ENCODE measurements at regions of chr20 and their contacts with region 1.

Region 1: GRCh38 chr20:38165089-38165989 is at the start of gene TGM2:
- DNase-seq: peak; percentile 41
- H3K4me3 Mint-ChIP-seq: no peak within 1 kb of the TSS
- H3K27ac Mint-ChIP-seq: no peak within 1 kb of the TSS
- H3K4me1 Mint-ChIP-seq: peaks cover 5% of the 10 kb centered on the region
- H3K27me3 Mint-ChIP-seq: peaks cover 21% of the 10 kb centered on the region
- total RNA-seq, gene TGM2: not detected

Region 2: DNA sequence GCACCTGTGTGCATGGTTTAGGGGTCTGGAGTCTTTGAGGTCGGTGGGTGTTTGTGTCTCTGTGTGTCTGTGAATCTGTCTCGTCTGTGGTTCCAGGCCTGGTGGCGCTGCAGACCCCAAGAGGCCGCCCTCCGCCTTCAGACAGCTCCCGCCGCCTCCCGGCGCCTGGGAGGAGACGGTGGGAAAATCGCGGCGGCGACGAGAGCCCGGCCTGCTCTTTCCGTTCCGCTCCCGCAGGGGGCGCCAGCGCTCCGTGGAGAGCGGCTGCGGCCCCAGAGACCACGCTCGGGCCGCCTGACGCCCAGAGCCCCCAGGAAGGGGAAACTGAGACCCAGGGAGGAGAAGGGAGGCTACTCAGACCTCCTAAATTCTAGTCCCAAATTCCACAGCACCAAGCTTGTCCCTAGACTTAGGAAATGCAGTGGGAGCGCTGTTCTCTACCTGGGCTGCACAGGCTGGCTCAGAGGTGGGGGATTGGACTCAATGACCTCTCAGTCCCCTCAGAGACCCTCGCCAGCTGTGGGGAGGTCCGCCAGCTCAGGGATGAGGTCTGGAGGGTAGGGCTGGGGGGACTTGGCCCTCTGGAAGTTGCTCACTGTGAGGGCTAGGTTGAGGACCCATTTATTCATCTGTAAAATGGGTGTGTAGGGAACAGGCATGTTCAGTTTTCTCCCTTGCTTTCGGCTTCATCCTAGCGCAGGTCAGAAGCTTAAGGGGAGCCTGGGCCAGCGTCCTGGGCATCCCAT is 600.8 kb before region 1 on chr20:
- CTCF ChIA-PET with region 1: no interaction called
- intact Hi-C with region 1: loop called (anchors 5 kb)
- DNase-seq: peak; percentile 39
- H3K4me3 Mint-ChIP-seq: no peak overlapping the region
- H3K27ac Mint-ChIP-seq: no peak overlapping the region
- H3K4me1 Mint-ChIP-seq: peaks cover 2% of the 10 kb centered on the region
- H3K27me3 Mint-ChIP-seq: peaks cover 37% of the 10 kb centered on the region

Region 3: GRCh38 chr20:37901654-37902503 is 263.5 kb before region 1 on chr20:
- CTCF ChIA-PET with region 1: interaction called, 3 read pairs
- intact Hi-C with region 1: loop called (anchors 5 kb)
- DNase-seq: peak; percentile 61
- H3K4me3 Mint-ChIP-seq: peak overlapping the region; percentile 26
- H3K27ac Mint-ChIP-seq: no peak overlapping the region
- H3K4me1 Mint-ChIP-seq: peaks cover 13% of the 10 kb centered on the region
- H3K27me3 Mint-ChIP-seq: peaks cover 62% of the 10 kb centered on the region

Region 4: DNA sequence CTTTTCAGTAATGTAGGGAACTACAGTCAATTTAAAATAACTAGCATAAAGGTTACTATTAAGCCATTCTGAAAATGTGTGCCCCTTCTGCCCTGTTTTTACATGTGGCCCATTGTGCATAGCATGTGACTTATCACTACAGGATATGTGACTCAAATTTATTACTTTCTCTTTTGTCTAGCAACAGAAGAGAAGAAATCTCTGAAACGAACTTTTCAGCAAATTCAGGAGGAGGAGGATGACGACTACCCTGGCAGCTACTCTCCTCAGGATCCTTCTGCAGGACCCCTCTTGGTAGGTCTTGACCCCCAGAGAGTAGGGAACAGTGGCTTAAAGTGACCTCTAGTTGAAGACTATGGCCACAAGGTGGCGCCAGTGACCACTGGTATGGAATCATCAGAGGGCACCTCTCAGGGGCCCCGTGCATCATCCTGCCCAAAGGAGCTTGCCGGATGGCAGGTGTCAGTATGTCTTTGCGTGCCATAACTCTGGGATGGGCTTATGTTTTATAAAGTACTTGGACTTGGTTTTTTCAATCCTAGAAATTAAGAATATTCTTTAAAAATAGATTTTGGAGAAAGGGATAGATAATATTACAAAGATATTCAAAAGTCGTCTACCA is 107.9 kb before region 1 on chr20:
- CTCF ChIA-PET with region 1: interaction called, 7 read pairs
- intact Hi-C with region 1: loop called (anchors 1 kb)
- DNase-seq: peak; percentile 82
- H3K4me3 Mint-ChIP-seq: no peak overlapping the region
- H3K27ac Mint-ChIP-seq: peak overlapping the region; percentile 73
- H3K4me1 Mint-ChIP-seq: peaks cover 40% of the 10 kb centered on the region
- H3K27me3 Mint-ChIP-seq: no peaks in the 10 kb centered on the region

Region 5: DNA sequence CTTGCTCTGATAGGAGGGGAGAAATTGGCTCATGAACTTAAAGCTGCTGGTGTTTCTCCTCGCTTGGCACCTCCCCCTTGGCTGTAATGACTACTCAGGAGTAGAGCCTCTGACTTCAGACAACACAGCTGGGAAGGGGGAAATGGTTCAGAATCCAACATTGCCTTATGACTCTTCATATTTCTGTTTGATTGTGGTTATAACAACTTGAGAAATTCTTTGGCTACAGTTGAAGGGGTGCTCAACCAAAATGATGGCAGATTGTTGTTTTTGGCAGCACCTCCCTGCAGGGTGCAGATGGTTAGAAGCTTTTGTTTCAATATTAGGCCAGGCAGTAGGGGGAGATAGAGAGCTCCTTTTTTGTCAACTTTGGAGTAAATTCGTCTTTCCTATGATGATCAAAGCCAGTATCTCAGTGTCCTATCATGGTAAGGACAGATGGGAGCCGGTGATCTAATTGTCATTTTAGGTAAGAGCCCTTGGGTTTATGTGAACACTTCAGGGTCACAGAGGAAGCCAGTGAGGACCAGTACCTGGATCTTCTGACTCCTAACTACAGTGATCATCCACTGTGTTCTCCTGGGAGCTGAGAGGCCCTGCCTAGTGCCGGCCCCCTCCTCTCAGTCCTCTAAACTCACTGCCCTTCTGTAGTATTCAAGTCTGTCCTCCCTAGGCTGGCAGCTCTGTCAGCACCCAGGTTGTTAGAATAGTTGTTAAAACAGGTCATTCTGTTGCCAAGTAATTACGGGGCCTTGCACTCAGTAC is 91.8 kb before region 1 on chr20:
- CTCF ChIA-PET with region 1: interaction called, 3 read pairs
- intact Hi-C with region 1: loop called (anchors 5 kb)
- DNase-seq: peak; percentile 25
- H3K4me3 Mint-ChIP-seq: no peak overlapping the region
- H3K27ac Mint-ChIP-seq: no peak overlapping the region
- H3K4me1 Mint-ChIP-seq: peaks cover 2% of the 10 kb centered on the region
- H3K27me3 Mint-ChIP-seq: no peaks in the 10 kb centered on the region

Region 6: GRCh38 chr20:38315290-38315966 is 150.1 kb after region 1 on chr20:
- CTCF ChIA-PET with region 1: no interaction called
- intact Hi-C with region 1: no loop called
- DNase-seq: no peak
- H3K4me3 Mint-ChIP-seq: no peak overlapping the region
- H3K27ac Mint-ChIP-seq: no peak overlapping the region
- H3K4me1 Mint-ChIP-seq: no peaks in the 10 kb centered on the region
- H3K27me3 Mint-ChIP-seq: peaks cover 15% of the 10 kb centered on the region

Measured in activated naive CD4-positive, alpha-beta T cell treated with anti-CD3 and anti-CD28 coated beads for 36 hours (primary cell).